Activated CD4-positive, alpha-beta T cell treated with anti-CD3 and anti-CD28 coated beads for 36 hours (primary cell): ENCODE measurements at regions of chr6 and their contacts with region 1.

Region 1: GRCh38 chr6:44470746-44471145 is 83.2 kb downstream of the CDC5L start:
- DNase-seq: no peak
- ATAC-seq: no peak
- H3K4me3 Mint-ChIP-seq: no peak overlapping the region
- H3K27ac Mint-ChIP-seq: no peak overlapping the region
- H3K4me1 Mint-ChIP-seq: no peaks in the 10 kb centered on the region
- H3K27me3 Mint-ChIP-seq: no peaks in the 10 kb centered on the region

Region 2: GRCh38 chr6:43714311-43715055 is 756.3 kb before region 1 on chr6:
- CTCF ChIA-PET with region 1: no interaction called
- POLR2A ChIA-PET with region 1: no interaction called
- intact Hi-C with region 1: no loop called
- DNase-seq: no peak
- ATAC-seq: no peak
- H3K4me3 Mint-ChIP-seq: no peak overlapping the region
- H3K27ac Mint-ChIP-seq: no peak overlapping the region
- H3K4me1 Mint-ChIP-seq: peaks cover 6% of the 10 kb centered on the region
- H3K27me3 Mint-ChIP-seq: peaks cover 15% of the 10 kb centered on the region

Region 3: DNA sequence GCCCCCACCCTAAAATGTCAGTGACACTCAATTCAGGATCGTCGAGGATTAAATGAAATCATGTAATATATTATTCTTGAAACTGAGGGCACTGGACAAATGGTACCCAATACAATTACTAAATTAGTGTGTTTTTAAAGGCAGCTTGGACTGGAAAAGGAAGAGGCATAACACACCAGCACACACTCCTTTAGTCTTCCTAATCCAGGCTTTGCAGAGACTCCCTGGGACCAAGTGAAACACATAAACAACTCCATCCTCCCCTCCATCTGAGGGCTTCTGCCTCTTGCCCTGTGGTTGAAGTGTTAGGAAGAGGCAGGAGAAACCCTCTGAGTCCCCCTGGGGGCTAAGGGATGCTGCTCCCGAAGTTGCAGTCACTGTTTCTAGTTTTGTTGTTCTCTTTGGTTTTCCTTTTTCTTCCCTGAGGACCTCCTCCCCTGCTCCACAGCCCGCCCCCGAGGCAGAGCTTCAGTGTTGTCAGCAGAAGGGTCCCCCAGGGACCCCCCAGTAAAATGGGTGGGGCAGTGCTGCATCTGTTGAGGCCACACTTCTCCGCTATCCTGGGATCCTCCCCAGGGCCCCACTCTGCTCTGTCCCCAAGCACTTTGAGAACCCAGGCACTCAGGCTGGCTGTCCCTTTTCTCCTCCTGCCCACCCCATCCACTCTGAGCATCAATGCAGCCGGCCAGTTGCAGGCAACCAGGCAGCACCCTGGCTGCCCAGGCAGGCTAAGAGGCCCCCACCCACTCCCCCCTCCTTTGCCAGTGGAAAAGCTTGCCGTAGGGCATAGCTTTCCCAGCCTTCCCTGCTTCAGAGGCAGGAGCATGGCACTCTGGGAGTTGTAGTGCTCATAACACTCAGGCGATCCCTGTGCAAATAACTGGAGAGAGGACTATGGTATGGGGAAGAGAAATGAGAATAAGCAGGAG is 337.5 kb before region 1 on chr6:
- CTCF ChIA-PET with region 1: no interaction called
- POLR2A ChIA-PET with region 1: no interaction called
- intact Hi-C with region 1: no loop called
- DNase-seq: peak; percentile 18
- ATAC-seq: peak; percentile 57
- H3K4me3 Mint-ChIP-seq: no peak overlapping the region
- H3K27ac Mint-ChIP-seq: no peak overlapping the region
- H3K4me1 Mint-ChIP-seq: peaks cover 8% of the 10 kb centered on the region
- H3K27me3 Mint-ChIP-seq: no peaks in the 10 kb centered on the region

Region 4: GRCh38 chr6:44431118-44431725 is 39.5 kb before region 1 on chr6:
- CTCF ChIA-PET with region 1: interaction called, 15 read pairs
- POLR2A ChIA-PET with region 1: no interaction called
- intact Hi-C with region 1: loop called in 1 of 2 experiments (anchors 1 kb)
- DNase-seq: peak; percentile 66
- ATAC-seq: peak; percentile 85
- H3K4me3 Mint-ChIP-seq: no peak overlapping the region
- H3K27ac Mint-ChIP-seq: no peak overlapping the region
- H3K4me1 Mint-ChIP-seq: peaks cover 2% of the 10 kb centered on the region
- H3K27me3 Mint-ChIP-seq: no peaks in the 10 kb centered on the region